Panc1 (cell line): ENCODE measurements at regions of chr12 and their contacts with region 1.

Region 1: DNA sequence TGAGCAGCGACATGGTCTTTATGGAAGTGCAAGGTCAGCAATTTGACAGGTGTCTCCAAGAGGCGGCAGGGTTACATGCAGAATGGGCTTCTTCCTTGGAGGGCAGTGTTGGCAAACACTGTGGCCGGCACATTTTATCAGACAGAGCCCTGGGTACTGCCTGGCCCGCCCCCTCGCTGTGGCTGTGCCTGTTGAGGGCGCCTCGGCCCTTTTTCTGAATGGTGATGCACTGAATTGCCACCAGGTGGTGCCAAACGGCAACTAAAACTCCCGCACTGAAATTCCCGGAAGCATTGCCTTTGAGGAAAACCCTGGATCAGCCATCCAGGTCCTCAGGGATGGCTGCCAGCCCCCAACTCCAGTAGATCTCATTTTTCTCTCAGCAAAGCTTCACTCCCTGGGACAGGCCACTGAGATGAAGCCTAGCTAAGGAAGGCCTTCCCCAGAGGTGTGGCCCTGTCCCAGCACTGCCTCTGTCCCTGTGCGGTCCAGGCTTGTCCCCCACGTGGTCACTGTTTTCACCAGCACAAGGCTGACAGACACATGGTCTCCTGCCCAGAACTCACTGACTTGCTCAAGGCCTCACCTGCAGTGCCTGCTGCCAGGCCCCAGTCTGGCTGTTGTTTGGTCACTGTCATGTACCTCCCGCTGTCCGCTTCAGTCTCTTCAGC is 73.6 kb downstream of the TESC start:
- DNase-seq: peak; percentile 7
- ATAC-seq: peak; percentile 93
- H3K4me3 ChIP-seq: no peak overlapping the region
- H3K27ac ChIP-seq: no peak overlapping the region
- H3K4me1 ChIP-seq: no peaks in the 10 kb centered on the region
- H3K27me3 ChIP-seq: no peaks in the 10 kb centered on the region
- CTCF ChIP-seq: peak; percentile 92

Region 2: GRCh38 chr12:116389990-116390389 is 635.6 kb before region 1 on chr12:
- CTCF ChIA-PET with region 1: no interaction called
- POLR2A ChIA-PET with region 1: no interaction called
- in situ Hi-C with region 1: no loop called
- intact Hi-C with region 1: no loop called
- DNase-seq: no peak
- ATAC-seq: peak; percentile 86
- H3K4me3 ChIP-seq: no peak overlapping the region
- H3K27ac ChIP-seq: peak overlapping the region; percentile 88
- H3K4me1 ChIP-seq: peaks cover 39% of the 10 kb centered on the region
- H3K27me3 ChIP-seq: no peaks in the 10 kb centered on the region
- CTCF ChIP-seq: no peak

Region 3: DNA sequence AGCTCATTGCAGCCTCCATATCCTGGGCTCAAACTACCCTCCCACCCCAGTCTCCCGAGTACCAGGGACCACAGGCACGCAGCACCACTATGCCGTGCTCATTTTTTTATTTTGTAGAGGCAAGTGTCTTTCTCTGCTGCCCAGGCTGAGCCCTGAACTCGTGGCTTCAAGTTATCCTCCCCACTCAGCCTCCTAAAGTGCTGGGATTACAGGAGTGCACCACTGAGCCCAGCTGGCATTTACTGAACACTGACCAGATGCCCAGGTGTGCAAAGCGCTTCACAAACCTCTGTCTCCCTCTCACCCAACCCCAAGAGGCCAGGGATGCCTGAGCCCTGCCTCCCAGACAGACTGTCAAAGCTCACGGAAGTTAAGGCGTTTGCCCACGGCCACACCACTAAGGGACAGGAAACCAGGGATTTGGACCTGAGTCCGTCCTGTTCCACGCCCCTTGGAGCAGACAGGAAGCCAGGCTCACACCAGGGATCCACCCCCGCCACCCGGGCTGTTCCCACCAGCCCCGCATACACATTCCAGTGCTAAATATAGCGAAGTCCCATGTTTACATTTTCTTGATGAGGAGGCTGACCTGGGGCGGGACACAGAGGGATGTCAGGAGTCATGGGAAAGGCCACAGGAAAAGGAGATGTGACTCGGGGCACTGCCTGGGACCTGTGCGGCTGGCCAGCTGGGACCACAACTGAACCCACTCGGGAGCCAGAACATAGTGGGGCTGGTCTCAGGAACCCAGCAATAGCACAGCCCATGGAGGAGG is 22.4 kb after region 1 on chr12:
- CTCF ChIA-PET with region 1: no interaction called
- POLR2A ChIA-PET with region 1: no interaction called
- in situ Hi-C with region 1: no loop called
- intact Hi-C with region 1: no loop called
- DNase-seq: no peak
- ATAC-seq: no peak
- H3K4me3 ChIP-seq: no peak overlapping the region
- H3K27ac ChIP-seq: no peak overlapping the region
- H3K4me1 ChIP-seq: no peaks in the 10 kb centered on the region; the same call in 1 of the 2 replicates
- H3K27me3 ChIP-seq: peaks cover 2% of the 10 kb centered on the region; the same call in 1 of the 2 replicates
- CTCF ChIP-seq: no peak

Region 4: DNA sequence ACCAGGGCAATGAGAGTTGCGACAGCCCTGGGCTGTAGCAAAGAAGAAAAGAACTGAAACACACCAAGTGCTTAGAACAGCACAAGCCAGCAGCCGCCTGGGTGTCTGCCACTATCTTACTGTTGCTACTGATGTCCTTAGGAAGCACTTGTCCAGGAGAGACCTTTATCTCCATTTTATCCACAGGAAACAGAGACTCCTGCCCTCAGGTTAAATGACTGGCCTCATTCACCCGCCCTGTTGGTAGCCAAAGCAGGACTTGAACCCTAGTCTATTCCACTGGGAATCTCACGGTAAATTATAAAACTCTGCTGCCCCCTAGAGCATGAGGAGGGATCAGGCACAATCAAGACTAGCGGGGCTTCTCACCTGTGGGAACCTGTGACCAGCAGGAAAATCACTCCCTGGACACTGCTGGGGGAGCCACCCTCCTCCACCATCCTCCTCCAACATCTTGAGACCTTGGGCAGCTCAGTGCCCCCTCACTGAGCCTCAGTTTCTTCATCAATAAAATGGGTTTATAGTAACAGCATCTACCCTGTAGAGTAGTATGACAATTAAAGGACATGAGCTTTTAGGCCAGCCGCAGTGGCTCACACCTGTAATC is 94.1 kb after region 1 on chr12:
- CTCF ChIA-PET with region 1: interaction called, 3 read pairs
- POLR2A ChIA-PET with region 1: no interaction called
- in situ Hi-C with region 1: no loop called
- intact Hi-C with region 1: loop called (anchors 1 kb)
- DNase-seq: peak; percentile 22
- ATAC-seq: peak; percentile 88
- H3K4me3 ChIP-seq: no peak overlapping the region
- H3K27ac ChIP-seq: no peak overlapping the region
- H3K4me1 ChIP-seq: peaks cover 3% of the 10 kb centered on the region; the same call in 1 of the 2 replicates
- H3K27me3 ChIP-seq: no peaks in the 10 kb centered on the region
- CTCF ChIP-seq: peak; percentile 86

Region 5: GRCh38 chr12:117318591-117318990 is 293.0 kb after region 1 on chr12:
- CTCF ChIA-PET with region 1: no interaction called
- POLR2A ChIA-PET with region 1: no interaction called
- in situ Hi-C with region 1: no loop called
- intact Hi-C with region 1: no loop called
- DNase-seq: no peak
- ATAC-seq: no peak
- H3K4me3 ChIP-seq: no peak overlapping the region
- H3K27ac ChIP-seq: no peak overlapping the region
- H3K4me1 ChIP-seq: no peaks in the 10 kb centered on the region
- H3K27me3 ChIP-seq: peaks cover 8% of the 10 kb centered on the region; the same call in 1 of the 2 replicates
- CTCF ChIP-seq: no peak

Region 6: DNA sequence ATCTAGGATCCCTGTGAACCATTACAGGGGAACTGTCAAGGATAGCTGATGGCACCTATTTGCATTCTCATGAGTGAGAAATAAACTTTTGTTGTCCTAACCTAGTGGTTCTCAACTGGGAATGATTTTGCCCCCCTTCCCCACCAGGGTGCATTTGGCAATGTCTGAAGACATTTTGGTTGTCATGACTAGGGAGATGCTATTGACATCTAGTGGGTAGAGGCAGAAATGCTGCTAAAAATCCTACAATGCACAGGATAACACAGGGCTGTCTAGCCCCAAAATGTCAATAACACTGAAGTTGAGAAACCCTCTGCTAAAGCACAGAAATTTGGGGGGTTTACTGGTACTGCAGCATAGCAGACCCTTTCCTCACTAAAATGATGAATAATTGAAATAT is 1814.8 kb after region 1 on chr12:
- CTCF ChIA-PET with region 1: no interaction called
- POLR2A ChIA-PET with region 1: no interaction called
- in situ Hi-C with region 1: no loop called
- intact Hi-C with region 1: no loop called
- DNase-seq: no peak
- ATAC-seq: no peak
- H3K4me3 ChIP-seq: no peak overlapping the region
- H3K27ac ChIP-seq: no peak overlapping the region
- H3K4me1 ChIP-seq: no peaks in the 10 kb centered on the region
- H3K27me3 ChIP-seq: no peaks in the 10 kb centered on the region; the same call in 1 of the 2 replicates
- CTCF ChIP-seq: peak; percentile 44